ENCODE measurements at regions of chr3 and their contacts with region 1.

Region 1: GRCh38 chr3:69013253-69014021 is at the start of gene EOGT:
- DNase-seq: peak; percentile 93
- H3K4me3 ChIP-seq: peak within 1 kb of the TSS; percentile 56 to 80 (median 76)
- H3K27ac ChIP-seq: peak within 1 kb of the TSS; percentile 97
- H3K4me1 ChIP-seq: peaks cover 53% of the 10 kb centered on the region
- H3K27me3 ChIP-seq: no peaks in the 10 kb centered on the region
- CTCF ChIP-seq: peak; percentile 56 to 77
- POLR2A ChIP-seq: peak; percentile 94
- total RNA-seq, gene EOGT: 99.4 and 103 TPM in 2 replicates

Region 2: GRCh38 chr3:68919000-68919399 is 94.4 kb before region 1 on chr3:
- CTCF ChIA-PET with region 1: no interaction called
- POLR2A ChIA-PET with region 1: no interaction called
- dilution Hi-C with region 1: no loop called
- intact Hi-C with region 1: no loop called
- DNase-seq: peak; percentile 21
- H3K4me3 ChIP-seq: no peak overlapping the region
- H3K27ac ChIP-seq: no peak overlapping the region
- H3K4me1 ChIP-seq: no peaks in the 10 kb centered on the region
- H3K27me3 ChIP-seq: no peaks in the 10 kb centered on the region
- CTCF ChIP-seq: no peak
- POLR2A ChIP-seq: no peak

Region 3: DNA sequence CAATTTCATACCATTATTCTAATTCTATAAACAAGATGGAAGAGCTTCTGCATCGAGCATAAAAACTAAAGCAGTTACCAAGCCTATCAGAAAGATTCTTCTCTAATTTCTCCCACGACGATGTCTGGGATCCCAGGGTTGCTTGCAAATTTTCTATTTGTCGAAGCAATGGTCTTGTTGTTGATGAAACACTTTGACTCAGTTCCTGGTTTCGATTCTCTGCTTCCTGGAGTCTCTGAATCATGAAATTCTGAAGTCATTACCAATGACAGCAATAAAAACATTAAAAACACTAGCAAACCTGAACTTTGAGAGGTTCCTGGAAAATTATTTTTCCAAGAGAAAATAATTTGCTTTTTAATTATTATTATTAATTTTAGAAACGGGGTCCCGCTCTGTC is 20.0 kb after region 1 on chr3:
- CTCF ChIA-PET with region 1: interaction called, 14 read pairs
- POLR2A ChIA-PET with region 1: interaction called, 8 read pairs
- dilution Hi-C with region 1: no loop called
- intact Hi-C with region 1: loop called (anchors 1 kb)
- DNase-seq: peak; percentile 94
- H3K4me3 ChIP-seq: peak overlapping the region in 1 of 3 experiments; percentile 33
- H3K27ac ChIP-seq: peak overlapping the region; percentile 96
- H3K4me1 ChIP-seq: peaks cover 25% of the 10 kb centered on the region
- H3K27me3 ChIP-seq: no peaks in the 10 kb centered on the region
- CTCF ChIP-seq: no peak
- POLR2A ChIP-seq: no peak

Measured in endothelial cell of umbilical vein (primary cell).